Dendritic cell treated with granulocyte-macrophage colony-stimulating factor and Interleukin-4, amounts not matched to agents 40 ng/mL and 50 ng/mL, for 4 days (primary cell): ENCODE measurements at regions of chr1 and their contacts with region 1.

Region 1: DNA sequence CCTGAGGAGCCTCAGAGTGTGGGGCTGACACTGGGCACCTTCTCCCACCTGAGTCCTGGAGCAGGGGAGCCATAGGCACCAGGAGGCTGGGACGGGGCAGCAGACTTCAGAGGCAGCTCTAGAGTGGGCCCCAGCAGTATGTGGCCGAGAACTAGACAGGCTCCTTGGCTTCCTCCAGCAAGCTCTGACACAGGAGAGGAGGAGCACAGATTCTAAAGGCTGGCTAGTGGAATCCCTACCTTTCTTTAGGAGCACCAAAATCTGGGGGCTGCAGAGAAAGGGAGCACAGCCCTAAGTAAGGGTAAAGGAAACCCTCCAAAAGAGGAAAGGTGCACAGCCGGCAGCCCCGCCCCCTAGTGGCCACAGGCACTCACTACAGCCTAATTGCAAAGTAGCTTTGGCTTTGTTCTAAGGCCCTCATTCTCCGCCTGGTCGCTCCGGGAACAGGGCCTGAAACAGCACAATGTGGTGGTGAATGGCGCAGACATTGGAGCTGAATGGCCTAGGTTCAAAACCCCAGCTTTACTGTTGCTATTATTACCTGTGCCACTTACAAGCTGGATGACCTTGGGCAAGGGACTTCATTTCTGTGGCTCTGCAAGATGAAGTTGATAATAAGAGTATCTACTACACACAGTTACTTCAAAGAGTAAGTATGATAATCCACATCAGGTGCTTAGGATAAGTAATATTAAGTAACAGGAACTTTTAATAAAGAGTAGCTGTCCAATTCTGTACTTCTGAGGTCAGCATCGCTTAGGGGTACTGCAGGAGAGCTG is 8.8 kb upstream of the GUCA2A start:
- H3K4me3 Mint-ChIP-seq: no peak overlapping the region
- H3K27ac Mint-ChIP-seq: no peak overlapping the region
- H3K4me1 Mint-ChIP-seq: peaks cover 6% of the 10 kb centered on the region
- H3K27me3 Mint-ChIP-seq: peaks cover 1% of the 10 kb centered on the region

Region 2: DNA sequence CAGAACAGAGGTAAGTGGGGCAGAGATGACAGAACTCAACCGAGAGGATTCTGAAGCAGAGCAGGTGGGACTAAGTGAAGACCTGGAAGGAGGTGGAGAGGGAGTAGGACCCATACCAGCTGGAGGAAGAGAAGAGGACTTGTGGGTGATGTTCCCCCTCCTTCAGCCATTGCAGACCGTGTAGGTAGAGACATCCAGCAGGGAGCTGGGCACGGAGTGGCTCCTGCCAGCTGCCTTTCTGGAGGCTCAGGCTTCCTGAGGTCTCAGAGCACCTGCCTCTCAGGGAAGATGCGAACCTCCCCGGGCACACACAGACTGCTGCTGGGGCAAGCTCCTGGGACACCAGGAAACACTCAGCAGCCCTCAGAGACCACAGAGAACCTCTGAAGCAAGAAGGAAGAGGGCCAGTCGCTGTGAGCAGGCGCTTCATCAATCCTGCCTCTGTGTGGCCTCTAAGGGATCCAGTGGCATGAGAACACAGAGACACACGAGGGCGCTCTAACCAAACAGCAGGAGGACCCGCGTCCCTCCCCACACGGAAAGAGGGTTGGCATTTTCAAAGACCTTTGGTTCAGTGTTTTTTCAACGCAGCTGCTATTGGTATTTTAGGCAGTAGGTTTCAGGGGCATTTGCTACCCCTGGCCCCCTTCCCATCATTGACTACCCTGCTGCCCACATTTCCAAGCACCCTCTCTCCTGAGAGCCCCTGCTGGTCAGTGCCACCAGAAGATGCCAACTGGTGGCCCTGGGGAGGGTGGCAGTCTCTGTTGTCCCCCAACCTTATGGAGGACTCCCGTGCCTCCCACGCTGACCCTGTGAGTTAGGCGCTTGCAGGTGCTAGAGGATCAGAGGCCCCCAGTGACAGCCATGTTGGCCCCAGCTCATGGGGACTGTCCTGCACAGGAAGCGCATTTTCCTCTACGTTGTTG is 599.3 kb before region 1 on chr1:
- intact Hi-C with region 1: loop called (anchors 1 kb)
- H3K4me3 Mint-ChIP-seq: no peak overlapping the region
- H3K27ac Mint-ChIP-seq: peak overlapping the region; percentile 56
- H3K4me1 Mint-ChIP-seq: peaks cover 15% of the 10 kb centered on the region
- H3K27me3 Mint-ChIP-seq: no peaks in the 10 kb centered on the region

Region 3: DNA sequence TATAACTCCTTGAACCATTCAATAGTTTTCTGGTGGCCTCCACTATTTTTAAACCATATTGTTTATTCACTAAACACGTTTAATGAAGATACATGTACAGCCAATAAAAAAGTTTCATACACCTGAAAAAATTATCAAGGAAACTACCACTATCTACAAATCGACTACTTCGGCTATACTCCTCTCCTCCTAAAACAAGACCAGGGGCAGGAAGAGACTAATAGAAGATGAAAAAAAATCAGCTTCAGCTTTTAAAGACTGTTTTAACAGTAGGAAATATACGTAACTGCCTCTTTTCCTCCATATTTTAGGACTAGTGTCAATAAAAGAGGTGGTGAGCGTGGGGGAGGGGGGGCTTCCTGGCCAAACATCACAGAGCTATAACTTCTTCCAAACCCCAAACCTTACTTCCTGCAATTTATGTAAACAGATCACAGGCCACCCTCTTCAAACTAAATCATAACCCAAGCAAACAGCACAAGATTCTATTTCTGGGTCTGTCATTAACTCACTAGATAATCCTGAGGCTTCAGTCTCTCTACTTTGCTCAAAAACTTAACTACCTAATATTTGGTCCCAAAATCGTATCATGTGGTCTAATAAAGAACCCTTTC is 146.6 kb after region 1 on chr1:
- intact Hi-C with region 1: loop called (anchors 10 kb)
- H3K4me3 Mint-ChIP-seq: no peak overlapping the region
- H3K27ac Mint-ChIP-seq: no peak overlapping the region
- H3K4me1 Mint-ChIP-seq: peaks cover 60% of the 10 kb centered on the region
- H3K27me3 Mint-ChIP-seq: no peaks in the 10 kb centered on the region